Motor neuron (in vitro differentiated cells): ENCODE measurements at regions of chr10 and their contacts with region 1.

Region 1: DNA sequence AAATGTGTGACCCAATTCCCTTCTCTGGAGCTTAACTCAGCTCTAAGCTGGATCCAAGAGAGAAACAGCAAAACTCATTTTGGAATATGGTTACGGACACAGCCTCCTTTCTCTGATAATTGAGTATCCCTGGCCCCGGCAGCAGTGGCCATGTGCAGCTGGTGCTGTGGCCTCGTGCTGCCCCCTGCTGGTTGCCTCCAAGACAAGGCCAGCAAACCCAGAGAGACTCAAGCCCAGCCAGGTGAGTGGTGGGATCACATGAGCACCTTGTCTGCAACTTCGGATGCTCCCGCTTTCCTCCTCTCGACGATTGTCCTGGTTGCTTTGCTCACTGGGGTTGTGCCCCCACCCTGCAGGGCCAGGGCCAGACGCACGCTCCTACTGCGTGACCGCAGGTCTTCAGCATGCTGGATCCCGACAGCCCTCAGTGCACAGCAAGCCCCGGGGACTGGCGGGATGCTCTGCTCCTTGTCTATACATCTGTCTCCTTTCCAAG is 19.4 kb downstream of the SFTPD start:
- ATAC-seq: peak; percentile 74 to 99 (median 90)
- H3K4me3 ChIP-seq: no peak overlapping the region
- H3K27ac ChIP-seq: no peak overlapping the region
- H3K4me1 ChIP-seq: no peaks in the 10 kb centered on the region

Region 2: DNA sequence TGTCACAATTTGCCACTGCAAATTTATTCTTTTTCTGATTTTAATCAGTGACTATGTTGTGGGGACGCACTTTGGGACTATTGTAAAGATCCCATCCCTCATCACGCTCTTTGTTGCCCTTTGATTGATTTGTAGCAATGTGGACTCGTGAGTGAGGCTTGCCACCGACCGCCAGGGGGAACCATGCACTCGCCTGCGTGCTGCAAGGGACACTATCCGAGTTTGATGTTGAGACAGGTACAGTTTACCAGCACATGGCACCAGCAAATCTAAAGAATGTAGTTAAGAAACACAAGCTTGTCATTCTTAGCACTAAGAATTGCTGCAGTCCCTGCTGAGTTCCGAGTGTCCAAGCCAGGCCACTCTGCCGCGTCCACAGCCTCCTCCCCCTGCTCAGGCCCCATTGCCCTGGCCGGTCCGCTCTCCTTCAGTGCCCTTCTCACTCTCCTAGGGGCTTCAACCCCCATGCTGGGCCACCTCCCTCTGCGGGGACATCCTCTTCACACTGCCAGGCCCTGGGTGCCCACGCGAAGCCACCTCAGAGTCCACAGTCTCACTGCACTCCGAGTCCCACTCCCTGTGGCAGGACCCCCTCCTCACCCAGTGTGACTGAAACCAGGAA is 367.2 kb before region 1 on chr10:
- in situ Hi-C with region 1: loop called in 3 of 9 experiments (anchors 25 kb)
- ATAC-seq: peak; percentile 54 to 98 (median 74)
- H3K4me3 ChIP-seq: no peak overlapping the region
- H3K27ac ChIP-seq: no peak overlapping the region
- H3K4me1 ChIP-seq: no peaks in the 10 kb centered on the region